Caco-2 (cell line): ENCODE measurements at regions of chr2 and their contacts with region 1.

Region 1: DNA sequence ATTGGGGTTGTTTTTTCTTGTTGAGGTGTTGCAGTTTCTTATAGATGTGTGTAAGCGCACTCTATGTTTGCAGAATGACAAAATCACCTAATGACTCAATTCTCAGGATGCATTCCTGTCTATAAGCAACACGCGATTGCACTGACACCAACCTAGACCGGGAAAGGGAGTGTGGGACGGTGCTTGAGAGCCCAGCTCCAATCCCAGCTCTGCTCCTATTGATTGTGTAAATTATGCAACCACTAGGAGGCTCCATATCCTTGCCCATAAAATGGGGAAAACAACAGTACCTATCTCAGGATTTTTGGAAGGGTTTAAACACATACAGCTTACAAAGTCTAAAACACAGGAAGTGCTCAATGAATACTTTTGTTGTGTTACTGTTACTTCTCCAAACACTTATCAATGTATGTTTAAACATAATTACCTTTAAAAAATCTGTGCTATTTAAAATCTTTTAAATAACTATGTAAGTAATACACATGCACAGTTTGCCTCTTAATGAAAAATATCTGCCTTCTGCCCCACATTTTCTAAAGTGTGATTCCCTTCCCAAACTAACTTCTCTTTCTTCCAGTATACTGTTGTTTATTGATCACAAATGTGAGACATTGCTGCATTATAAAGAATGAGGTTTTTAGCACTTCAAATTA is 132.5 kb downstream of the SPHKAP start:
- DNase-seq: peak; percentile 37 to 46
- H3K4me3 ChIP-seq: no peak overlapping the region
- H3K4me3 Mint-ChIP-seq: no peak overlapping the region
- H3K27ac Mint-ChIP-seq: no peak overlapping the region
- H3K4me1 ChIP-seq: no peaks in the 10 kb centered on the region
- H3K4me1 Mint-ChIP-seq: no peaks in the 10 kb centered on the region
- H3K27me3 ChIP-seq: no peaks in the 10 kb centered on the region
- H3K27me3 Mint-ChIP-seq: peaks cover 6% of the 10 kb centered on the region
- CTCF ChIP-seq: peak; percentile 26 to 63

Region 2: DNA sequence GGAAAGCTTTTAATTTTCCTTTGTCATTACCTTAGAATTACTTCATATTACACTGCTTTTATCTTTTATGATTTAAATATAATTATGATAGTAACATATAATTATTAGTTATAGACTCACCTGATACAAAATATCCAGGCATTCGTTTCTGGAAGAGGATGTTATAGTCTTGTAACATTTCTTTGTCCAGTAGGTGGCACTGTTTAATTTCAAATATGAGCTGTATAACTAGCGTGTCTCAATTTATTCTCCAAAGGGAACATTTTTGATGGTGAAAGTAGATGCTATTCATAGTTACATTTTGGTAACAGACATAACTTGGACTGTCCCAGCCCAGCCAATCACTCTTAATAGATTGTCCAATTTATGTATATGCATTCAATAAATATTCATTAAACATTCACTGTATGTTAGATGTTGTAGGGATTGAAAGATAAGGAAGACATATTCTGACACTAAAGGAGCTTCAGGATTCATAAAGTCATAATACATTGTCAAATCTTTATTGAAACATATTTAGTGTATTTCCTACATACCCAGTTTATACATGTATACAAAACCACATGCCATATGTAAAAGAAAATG is 158.4 kb before region 1 on chr2:
- CTCF ChIA-PET with region 1: interaction called, 5 read pairs
- POLR2A ChIA-PET with region 1: no interaction called
- intact Hi-C with region 1: loop called (anchors 2 kb)
- DNase-seq: peak in 1 of 2 experiments; percentile 41
- H3K4me3 ChIP-seq: no peak overlapping the region
- H3K4me3 Mint-ChIP-seq: no peak overlapping the region
- H3K27ac Mint-ChIP-seq: no peak overlapping the region
- H3K4me1 ChIP-seq: no peaks in the 10 kb centered on the region
- H3K4me1 Mint-ChIP-seq: no peaks in the 10 kb centered on the region
- H3K27me3 ChIP-seq: no peaks in the 10 kb centered on the region
- H3K27me3 Mint-ChIP-seq: no peaks in the 10 kb centered on the region
- CTCF ChIP-seq: peak; percentile 38 to 64

Region 3: DNA sequence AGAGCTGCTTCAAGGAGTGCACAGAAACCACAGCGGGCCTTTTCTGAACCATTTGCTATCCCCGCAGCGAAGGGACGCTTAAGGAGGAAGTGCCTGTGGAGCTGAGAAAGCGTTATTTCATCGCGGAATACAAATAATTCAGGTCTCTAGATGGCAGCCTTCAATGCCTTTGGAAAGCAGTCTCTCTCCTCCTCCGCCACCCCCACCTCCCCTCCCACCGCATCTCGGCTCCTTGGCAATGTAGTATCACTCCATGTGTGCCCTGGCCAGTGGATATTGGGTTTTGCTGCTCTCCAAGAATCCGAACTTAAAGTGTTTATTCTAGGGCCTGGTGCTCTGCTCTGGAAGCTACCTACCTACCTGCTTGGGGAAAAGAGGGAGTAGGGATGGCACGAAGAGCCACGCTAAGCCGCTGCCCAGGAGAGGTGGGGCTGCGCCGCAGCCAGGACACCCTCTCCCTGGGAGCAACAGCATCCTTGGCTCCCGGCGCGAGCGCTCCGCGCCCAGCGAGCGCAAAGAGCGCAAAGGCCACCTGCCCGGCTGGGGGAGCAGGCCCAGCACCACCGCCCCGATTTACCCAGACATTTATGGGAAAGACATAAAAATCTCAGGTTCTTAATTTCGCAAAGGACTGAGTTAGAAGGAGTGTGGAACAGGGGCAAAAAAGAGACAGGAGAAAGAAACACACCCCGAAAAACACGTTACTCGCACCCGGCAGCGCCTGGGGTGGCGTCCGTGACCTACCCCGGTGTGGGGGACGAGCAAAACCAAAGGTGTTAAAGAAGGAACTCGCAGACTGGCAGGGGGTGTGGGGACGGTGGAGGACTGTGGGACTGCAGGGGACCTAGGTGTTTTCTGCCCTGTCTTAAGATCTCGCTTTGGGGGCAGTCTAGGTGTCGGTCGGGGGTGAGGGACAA is 131.5 kb after region 1 on chr2:
- CTCF ChIA-PET with region 1: no interaction called
- POLR2A ChIA-PET with region 1: no interaction called
- intact Hi-C with region 1: loop called (anchors 10 kb)
- DNase-seq: no peak
- H3K4me3 ChIP-seq: no peak overlapping the region
- H3K4me3 Mint-ChIP-seq: no peak overlapping the region
- H3K27ac Mint-ChIP-seq: no peak overlapping the region
- H3K4me1 ChIP-seq: no peaks in the 10 kb centered on the region
- H3K4me1 Mint-ChIP-seq: no peaks in the 10 kb centered on the region
- H3K27me3 ChIP-seq: no peaks in the 10 kb centered on the region
- H3K27me3 Mint-ChIP-seq: peaks cover 6% of the 10 kb centered on the region
- CTCF ChIP-seq: no peak

Region 4: DNA sequence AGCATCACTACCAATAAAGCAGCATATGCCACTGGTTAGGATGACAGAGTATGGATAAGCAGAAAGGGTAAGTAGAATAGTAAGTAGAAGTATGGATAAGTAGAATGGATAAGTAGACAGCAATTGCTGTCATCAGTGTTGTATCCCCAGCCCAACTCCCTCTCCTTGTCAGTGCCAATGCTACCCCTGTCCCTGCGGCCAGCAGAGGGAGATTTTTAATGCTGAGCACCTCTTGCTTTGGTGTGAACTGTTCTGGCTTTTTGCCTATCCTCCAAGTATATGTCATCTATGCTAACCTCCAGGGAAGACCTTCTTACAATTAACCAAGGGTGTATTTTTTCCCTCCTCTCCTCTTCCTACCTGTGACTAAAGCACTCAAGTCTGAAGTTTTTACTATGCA is 269.3 kb after region 1 on chr2:
- CTCF ChIA-PET with region 1: no interaction called
- POLR2A ChIA-PET with region 1: no interaction called
- intact Hi-C with region 1: loop called (anchors 5 kb)
- DNase-seq: peak in 1 of 2 experiments; percentile 42
- H3K4me3 ChIP-seq: no peak overlapping the region
- H3K4me3 Mint-ChIP-seq: no peak overlapping the region
- H3K27ac Mint-ChIP-seq: no peak overlapping the region
- H3K4me1 ChIP-seq: no peaks in the 10 kb centered on the region
- H3K4me1 Mint-ChIP-seq: no peaks in the 10 kb centered on the region
- H3K27me3 ChIP-seq: no peaks in the 10 kb centered on the region
- H3K27me3 Mint-ChIP-seq: peaks cover 1% of the 10 kb centered on the region
- CTCF ChIP-seq: peak; percentile 40 to 60